Activated CD8-positive, alpha-beta memory T cell treated with anti-CD3 and anti-CD28 coated beads, Interleukin-2, amount 10 ng/mL, durations not matched to agents 7 days and 5 days (primary cell): ENCODE measurements at regions of chr1 and their contacts with region 1.

Region 1: GRCh38 chr1:19651141-19651737 is 7.1 kb downstream of the NBL1 start:
- DNase-seq: peak; percentile 66
- ATAC-seq: peak; percentile 67
- H3K4me3 Mint-ChIP-seq: no peak overlapping the region
- H3K27ac Mint-ChIP-seq: no peak overlapping the region
- H3K4me1 Mint-ChIP-seq: peaks cover 25% of the 10 kb centered on the region
- H3K27me3 Mint-ChIP-seq: no peaks in the 10 kb centered on the region

Region 2: DNA sequence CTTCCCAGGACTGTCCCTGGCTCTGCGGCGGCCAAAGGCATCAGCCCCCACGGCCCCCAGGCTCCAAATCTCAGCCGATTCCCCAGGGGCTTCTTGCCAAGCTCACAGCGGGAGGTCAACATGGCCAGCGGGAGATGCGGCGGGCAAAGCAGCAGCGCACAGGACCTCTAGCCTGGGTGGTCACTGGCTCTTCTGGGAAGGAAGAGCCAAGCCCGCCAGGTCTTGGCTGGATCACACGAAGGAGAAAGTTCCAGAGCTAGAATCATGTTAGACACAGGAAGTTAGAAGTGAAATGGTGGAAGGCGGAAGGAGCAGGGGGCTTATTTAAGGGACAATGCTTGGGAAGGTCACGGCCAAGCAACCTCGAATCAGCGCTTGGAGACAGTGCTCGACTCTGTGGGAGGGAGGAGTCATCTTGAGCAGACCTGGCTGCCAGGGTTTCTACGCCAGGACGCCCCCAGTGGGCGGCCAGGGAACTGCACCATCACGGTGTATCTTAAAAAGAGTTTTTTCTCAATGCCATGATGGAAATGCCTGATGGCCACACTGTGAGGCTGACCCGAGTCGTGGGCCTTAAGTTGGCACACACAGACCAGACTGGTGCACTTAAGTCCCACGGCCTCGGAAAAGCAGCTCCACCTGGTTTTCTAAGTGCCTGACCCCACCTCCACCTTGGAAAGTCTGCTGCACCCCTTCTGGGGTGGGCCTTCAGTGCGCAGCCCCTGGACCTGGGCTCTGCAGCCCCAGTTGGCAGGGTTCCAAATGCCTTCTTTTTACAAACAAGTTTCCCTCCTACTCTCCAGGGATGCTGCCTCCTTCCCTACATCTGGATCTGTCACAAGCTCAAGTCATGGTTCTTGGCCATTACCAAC is 309.8 kb before region 1 on chr1:
- CTCF ChIA-PET with region 1: interaction called, 18 read pairs
- DNase-seq: peak; percentile 79
- ATAC-seq: peak; percentile 57
- H3K4me3 Mint-ChIP-seq: no peak overlapping the region
- H3K27ac Mint-ChIP-seq: peak overlapping the region; percentile 43
- H3K4me1 Mint-ChIP-seq: peaks cover 19% of the 10 kb centered on the region
- H3K27me3 Mint-ChIP-seq: no peaks in the 10 kb centered on the region

Region 3: DNA sequence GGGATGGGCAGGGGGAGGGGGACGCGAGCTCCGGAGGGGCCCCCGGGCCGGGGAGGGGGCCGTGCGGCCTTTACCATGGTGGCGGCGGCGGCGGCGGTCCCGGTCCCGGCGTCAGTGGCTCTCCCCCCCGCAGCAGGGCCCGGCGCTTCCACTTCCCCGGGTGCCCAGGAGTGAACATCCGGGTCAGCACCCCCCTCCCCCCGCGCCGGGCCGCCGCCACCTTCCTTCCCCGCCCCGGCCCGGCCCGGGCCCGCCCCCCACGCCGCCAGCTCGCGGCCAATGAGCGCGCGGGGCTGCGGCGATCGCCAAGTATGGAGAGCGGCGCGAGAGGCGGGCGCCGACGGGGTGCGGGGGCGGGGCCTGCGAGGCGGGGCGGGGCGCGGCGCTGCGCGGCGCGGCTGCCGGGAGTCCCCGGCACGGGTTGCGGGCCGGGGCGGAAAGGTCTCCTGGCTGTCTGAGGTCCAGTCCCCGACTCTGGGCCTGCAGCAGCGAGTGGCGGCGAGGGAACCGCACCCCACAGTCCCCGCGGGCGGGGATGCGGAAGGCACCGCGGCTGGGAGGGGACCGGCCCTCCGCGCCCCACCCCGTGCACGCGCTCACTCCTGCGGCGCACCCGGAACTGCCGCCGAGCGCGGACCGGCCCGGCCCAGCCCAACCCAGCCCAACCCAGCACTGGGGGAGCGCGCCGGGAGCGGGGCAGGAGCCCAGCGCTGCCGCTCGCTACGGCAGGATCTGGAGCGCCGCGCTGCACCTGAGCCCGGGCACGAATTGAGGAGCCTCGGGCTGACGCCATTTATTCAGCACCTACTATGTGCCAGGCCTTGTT is 165.7 kb before region 1 on chr1 and contains the start of gene CAPZB:
- CTCF ChIA-PET with region 1: interaction called, 17 read pairs
- DNase-seq: peak; percentile 95
- ATAC-seq: peak; percentile 91
- H3K4me3 Mint-ChIP-seq: peak within 1 kb of the TSS; percentile 96
- H3K27ac Mint-ChIP-seq: peak within 1 kb of the TSS; percentile 95
- H3K4me1 Mint-ChIP-seq: peaks cover 52% of the 10 kb centered on the region
- H3K27me3 Mint-ChIP-seq: no peaks in the 10 kb centered on the region
- total RNA-seq, gene CAPZB: 411 to 427 TPM

Region 4: DNA sequence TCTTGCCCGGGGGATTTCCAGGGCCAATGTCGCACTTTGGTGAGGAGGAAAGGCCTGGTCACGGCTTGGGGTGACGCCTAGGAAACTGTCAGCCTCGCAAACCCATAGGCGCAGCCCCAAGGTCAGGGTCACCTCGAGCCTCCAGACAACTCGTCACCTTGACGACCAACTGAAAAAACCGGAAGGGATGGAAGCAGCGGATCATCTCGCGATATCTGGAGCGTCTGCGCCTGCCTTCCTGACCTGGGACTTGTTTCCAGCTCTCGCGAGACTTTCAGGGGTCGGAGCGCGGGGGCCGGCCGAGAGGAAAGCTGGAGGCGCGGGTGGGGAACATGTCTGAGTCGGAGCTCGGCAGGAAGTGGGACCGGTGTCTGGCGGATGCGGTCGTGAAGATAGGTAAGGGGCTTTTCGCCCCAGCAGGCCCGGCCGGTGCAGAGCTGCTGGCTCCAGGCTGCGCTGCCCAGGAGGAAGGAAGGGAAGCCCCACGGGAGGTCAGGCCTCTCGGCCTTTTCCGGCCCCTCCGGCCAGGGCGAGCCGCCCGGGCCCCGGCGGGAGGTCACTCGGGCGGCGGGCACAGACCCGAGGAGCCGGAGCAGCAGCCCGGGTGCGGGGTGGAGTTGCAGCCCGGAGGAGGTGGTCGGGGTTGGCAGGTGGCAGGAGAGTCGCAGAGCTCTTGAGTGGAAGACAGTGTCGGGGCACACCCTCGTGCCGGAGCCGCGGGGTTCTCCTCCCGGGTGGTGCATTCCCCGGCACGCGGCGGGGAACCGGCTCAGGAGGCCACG is 54.3 kb before region 1 on chr1:
- CTCF ChIA-PET with region 1: interaction called, 11 read pairs
- DNase-seq: peak; percentile 99
- ATAC-seq: peak; percentile 85
- H3K4me3 Mint-ChIP-seq: peak overlapping the region; percentile 94
- H3K27ac Mint-ChIP-seq: peak overlapping the region; percentile 97
- H3K4me1 Mint-ChIP-seq: peaks cover 48% of the 10 kb centered on the region
- H3K27me3 Mint-ChIP-seq: peaks cover 2% of the 10 kb centered on the region

Region 5: DNA sequence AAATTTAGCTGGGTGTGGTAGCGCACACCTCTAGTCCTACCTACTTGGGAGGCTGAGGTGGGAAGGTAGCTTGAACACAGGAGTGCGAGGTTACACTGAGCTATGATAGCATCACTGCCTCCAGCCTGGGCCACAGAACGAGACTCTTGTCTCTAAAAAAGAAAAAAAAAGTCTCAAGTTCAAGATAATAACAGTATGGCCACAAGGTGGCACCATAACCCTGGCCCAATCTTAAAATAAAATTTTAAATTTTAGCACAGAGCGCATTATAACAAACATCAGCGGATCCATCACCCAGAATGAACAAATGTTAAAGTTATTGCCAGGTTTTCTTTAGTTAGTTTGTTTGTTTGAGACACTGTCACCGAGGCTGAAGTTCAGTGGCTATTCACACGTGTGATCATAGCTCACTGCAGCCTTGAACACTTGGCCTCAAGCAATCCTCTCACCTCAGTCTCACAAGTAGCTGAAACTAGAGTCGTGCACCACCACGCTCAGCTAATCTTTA is 10.5 kb after region 1 on chr1:
- CTCF ChIA-PET with region 1: interaction called, 24 read pairs
- DNase-seq: peak; percentile 56
- ATAC-seq: no peak
- H3K4me3 Mint-ChIP-seq: no peak overlapping the region
- H3K27ac Mint-ChIP-seq: no peak overlapping the region
- H3K4me1 Mint-ChIP-seq: peaks cover 17% of the 10 kb centered on the region
- H3K27me3 Mint-ChIP-seq: peaks cover 34% of the 10 kb centered on the region

Region 6: DNA sequence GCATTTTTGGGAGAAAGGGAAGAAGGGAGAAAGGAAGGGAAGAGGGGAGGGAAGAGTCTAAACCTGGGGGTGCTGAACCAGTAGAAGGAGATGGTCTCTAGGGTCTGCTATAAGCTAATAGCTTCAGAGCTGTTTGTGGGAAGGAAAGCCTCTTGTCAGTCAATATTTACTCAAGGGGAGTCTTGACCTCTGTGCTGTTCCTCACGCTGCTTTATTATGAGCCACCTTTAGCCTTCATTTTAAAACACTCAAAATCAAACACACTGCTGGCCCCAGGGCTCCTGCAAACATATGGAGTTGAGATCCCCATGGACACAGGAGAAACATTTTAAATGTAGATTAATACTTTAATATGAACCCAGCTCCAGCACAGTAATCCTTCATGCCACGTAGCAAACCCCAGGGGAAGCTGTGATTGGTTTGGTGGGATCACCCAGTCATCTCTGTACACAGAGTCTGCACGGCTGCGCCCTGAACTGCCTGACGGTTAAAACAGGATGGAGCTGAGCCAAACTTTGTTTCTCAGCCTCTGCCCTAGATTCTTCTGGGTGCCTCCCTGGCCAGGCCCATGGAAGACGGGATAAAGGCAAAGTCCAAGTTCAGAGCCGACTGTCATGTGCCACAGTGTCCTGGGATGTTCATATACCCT is 599.2 kb after region 1 on chr1:
- CTCF ChIA-PET with region 1: no interaction called
- DNase-seq: peak; percentile 77
- ATAC-seq: peak; percentile 90
- H3K4me3 Mint-ChIP-seq: no peak overlapping the region
- H3K27ac Mint-ChIP-seq: peak overlapping the region; percentile 12
- H3K4me1 Mint-ChIP-seq: peaks cover 24% of the 10 kb centered on the region
- H3K27me3 Mint-ChIP-seq: peaks cover 6% of the 10 kb centered on the region